CD4-positive, alpha-beta memory T cell (primary cell): ENCODE measurements at regions of chr7 and their contacts with region 1.

Region 1: DNA sequence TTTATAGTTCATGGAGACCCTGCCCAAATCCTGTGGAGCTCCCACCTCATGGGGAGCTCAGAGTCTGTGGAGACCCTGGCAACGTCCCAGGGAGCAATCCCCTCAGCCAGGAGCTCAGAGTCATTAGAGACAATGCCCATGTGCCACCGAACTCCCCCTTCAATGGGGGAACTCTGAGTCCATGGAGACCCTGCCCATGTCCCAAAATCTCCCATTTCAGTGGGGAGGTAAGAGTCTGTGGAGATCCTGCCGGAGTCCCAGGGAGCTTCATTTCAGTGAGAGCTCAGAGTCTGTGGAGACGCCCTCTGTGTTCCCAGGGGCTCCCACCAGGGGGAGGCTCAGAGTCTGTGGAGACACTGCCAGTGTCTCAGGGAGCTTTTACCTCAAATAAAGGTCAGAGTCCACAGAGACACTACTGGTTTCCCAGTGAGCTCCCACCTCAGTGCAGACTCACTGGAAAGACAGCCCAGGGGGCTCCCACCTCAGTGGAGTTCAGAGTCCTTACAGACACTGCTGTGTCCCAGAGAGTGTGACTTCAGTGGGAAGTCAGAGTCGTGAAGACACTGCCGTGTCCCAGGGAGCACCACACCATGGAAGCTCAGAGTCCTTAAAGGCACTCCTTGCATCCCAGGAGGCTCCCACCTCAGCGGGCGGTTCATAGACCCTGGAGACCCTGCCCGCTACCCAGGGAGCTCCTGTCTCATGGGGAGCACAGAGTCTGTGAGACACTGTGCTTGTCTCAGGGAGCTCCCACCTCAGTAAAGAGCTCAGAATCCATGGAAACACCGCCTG is 5.0 kb downstream of the MYO1G start:
- DNase-seq: peak; percentile 44 to 72 (median 61)
- H3K4me3 ChIP-seq: no peak overlapping the region
- H3K4me3 Mint-ChIP-seq: peak overlapping the region in 1 of 8 donors; percentile 46
- H3K27ac ChIP-seq: peak overlapping the region; percentile 85
- H3K27ac Mint-ChIP-seq: peak overlapping the region in 6 of 7 donors; percentile 43 to 84 (median 51)
- H3K4me1 ChIP-seq: peaks cover 50% of the 10 kb centered on the region
- H3K4me1 Mint-ChIP-seq: peaks cover 12 to 62% (median 37%) of the 10 kb centered on the region in 4 donors
- H3K27me3 ChIP-seq: no peaks in the 10 kb centered on the region
- H3K27me3 Mint-ChIP-seq: no peaks in the 10 kb centered on the region

Region 2: DNA sequence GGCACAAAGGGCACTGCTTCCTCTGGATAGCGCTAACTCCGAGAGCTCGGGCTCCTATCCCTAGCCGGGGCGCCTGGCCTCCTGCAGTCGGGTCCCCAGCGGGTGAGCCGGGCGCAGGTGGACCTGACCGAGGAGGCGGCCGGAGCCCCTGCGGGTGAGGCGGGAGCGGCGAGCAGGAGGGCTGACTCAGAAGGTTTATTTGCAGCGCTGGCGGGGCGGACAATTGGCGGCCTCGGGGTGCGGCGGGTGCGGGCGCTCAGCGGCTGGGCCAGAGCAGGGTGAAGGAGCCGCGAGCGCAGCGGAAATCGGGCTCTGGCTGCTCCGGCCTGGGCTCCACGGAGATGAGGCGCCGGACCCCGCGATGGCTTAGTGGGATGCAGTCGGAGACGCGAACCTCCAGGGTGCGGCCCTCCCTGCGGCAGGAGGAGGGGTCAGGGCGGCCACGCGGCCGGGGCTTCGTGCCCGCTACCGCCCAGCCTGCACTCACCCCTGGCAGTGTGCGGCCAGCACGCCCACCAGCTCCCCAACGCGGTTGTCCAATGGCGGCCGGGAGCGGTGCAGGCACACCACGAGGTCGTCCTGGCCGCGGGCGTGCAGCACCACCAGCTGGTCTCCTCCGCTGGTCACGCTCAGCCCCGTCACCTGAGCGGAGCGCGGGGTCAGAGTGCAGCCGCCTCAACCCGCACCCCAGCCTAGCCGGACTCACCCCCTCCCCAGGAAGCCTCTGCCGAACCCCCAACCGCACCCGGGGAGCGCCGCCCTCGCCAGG is 11.1 kb before region 1 on chr7:
- CTCF ChIA-PET with region 1: interaction called, 19 read pairs
- POLR2A ChIA-PET with region 1: interaction called, 23 read pairs
- intact Hi-C with region 1: no loop called
- DNase-seq: no peak
- H3K4me3 ChIP-seq: no peak overlapping the region
- H3K4me3 Mint-ChIP-seq: no peak overlapping the region
- H3K27ac ChIP-seq: peak overlapping the region; percentile 26
- H3K27ac Mint-ChIP-seq: peak overlapping the region in 1 of 7 donors; percentile 79
- H3K4me1 ChIP-seq: peaks cover 19% of the 10 kb centered on the region
- H3K4me1 Mint-ChIP-seq: peaks cover 13 to 21% (median 18%) of the 10 kb centered on the region in 4 donors
- H3K27me3 ChIP-seq: no peaks in the 10 kb centered on the region
- H3K27me3 Mint-ChIP-seq: no peaks in the 10 kb centered on the region

Region 3: GRCh38 chr7:45013465-45013967 is 39.7 kb after region 1 on chr7:
- CTCF ChIA-PET with region 1: interaction called, 28 read pairs
- POLR2A ChIA-PET with region 1: interaction called, 8 read pairs
- intact Hi-C with region 1: no loop called
- DNase-seq: peak in 4 of 5 donors; percentile 55 to 71 (median 62)
- H3K4me3 ChIP-seq: no peak overlapping the region
- H3K4me3 Mint-ChIP-seq: peak overlapping the region in 3 of 8 donors; percentile 16 to 50 (median 41)
- H3K27ac ChIP-seq: no peak overlapping the region
- H3K27ac Mint-ChIP-seq: peak overlapping the region; percentile 41 to 92 (median 81)
- H3K4me1 ChIP-seq: peaks cover 23% of the 10 kb centered on the region
- H3K4me1 Mint-ChIP-seq: peaks cover 27 to 59% (median 39%) of the 10 kb centered on the region in 4 donors
- H3K27me3 ChIP-seq: no peaks in the 10 kb centered on the region
- H3K27me3 Mint-ChIP-seq: no peaks in the 10 kb centered on the region

Region 4: DNA sequence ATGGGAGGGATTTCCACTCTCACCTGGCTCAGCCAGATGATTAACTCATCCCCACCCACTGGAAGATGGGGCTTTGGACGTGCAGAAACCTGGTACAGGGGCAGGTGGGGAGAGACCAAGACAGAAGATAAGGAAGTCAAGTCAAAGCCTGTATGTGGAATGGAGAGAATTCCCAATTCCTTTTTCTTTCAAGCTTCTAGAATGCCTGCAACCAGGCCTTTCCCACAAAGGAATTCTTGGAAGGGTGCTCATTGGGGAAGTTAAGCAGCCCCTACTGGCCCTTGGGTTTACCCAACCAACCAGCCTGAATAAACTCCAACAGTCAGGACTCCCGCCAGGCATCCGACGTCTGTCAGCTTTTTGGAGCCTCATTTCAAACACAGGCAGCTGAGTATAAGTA is 65.3 kb after region 1 on chr7:
- CTCF ChIA-PET with region 1: interaction called, 88 read pairs
- POLR2A ChIA-PET with region 1: interaction called, 551 read pairs
- intact Hi-C with region 1: no loop called
- DNase-seq: no peak
- H3K4me3 ChIP-seq: no peak overlapping the region
- H3K4me3 Mint-ChIP-seq: no peak overlapping the region
- H3K27ac ChIP-seq: no peak overlapping the region
- H3K27ac Mint-ChIP-seq: peak overlapping the region in 6 of 7 donors; percentile 42 to 86 (median 72)
- H3K4me1 ChIP-seq: peaks cover 43% of the 10 kb centered on the region
- H3K4me1 Mint-ChIP-seq: peaks cover 38 to 81% (median 50%) of the 10 kb centered on the region in 4 donors
- H3K27me3 ChIP-seq: no peaks in the 10 kb centered on the region
- H3K27me3 Mint-ChIP-seq: no peaks in the 10 kb centered on the region

Region 5: DNA sequence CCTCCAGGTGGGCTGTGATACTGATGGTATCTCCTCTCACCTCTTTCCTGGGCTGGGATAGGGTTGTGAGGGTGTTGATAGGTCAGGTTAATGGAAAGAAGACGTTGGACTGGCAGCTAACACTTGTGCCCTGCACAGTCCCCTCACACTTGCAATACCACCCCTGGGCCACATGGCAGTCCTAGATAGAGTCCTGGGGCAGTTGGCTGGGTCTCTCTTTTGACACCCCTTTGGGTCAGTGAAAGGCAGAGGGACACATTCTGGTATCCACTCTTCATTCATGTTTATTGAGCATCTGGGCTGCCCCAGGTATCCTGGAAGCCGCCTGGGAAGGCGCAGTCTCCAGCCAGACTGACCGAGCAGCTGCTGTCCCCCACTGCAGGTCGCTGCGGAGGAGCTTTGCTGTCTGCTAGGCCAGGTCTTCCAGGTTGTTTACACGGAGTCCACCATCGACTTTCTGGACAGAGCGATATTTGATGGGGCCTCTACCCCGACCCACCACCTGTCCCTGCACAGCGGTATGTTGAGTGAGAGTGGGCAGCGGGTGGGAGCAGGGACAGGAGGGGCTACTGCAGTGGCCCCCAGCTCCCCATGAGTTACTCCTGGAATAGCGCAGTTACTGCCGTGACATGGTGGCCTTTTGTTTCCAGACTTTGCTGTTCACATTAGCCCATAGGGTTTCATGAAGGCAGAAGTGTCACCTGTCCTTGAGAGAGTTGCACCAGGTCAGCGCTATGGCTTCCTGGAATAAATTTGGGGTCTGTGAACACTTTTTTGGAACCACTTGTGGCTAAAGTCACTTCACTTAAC is 95.8 kb after region 1 on chr7:
- CTCF ChIA-PET with region 1: interaction called, 25 read pairs
- POLR2A ChIA-PET with region 1: interaction called, 4 read pairs
- intact Hi-C with region 1: no loop called
- DNase-seq: no peak
- H3K4me3 ChIP-seq: no peak overlapping the region
- H3K4me3 Mint-ChIP-seq: no peak overlapping the region
- H3K27ac ChIP-seq: no peak overlapping the region
- H3K27ac Mint-ChIP-seq: peak overlapping the region in 1 of 7 donors; percentile 25
- H3K4me1 ChIP-seq: peaks cover 12% of the 10 kb centered on the region
- H3K4me1 Mint-ChIP-seq: peaks cover 6 to 25% (median 14%) of the 10 kb centered on the region in 4 donors
- H3K27me3 ChIP-seq: no peaks in the 10 kb centered on the region
- H3K27me3 Mint-ChIP-seq: no peaks in the 10 kb centered on the region

Region 6: GRCh38 chr7:45136106-45137060 is 162.6 kb after region 1 on chr7:
- CTCF ChIA-PET with region 1: interaction called, 239 read pairs
- POLR2A ChIA-PET with region 1: interaction called, 31 read pairs
- intact Hi-C with region 1: loop called (anchors 1 kb)
- DNase-seq: peak; percentile 65 to 77 (median 74)
- H3K4me3 ChIP-seq: no peak overlapping the region
- H3K4me3 Mint-ChIP-seq: peak overlapping the region in 1 of 8 donors; percentile 55
- H3K27ac ChIP-seq: no peak overlapping the region
- H3K27ac Mint-ChIP-seq: peak overlapping the region in 5 of 7 donors; percentile 1 to 86 (median 73)
- H3K4me1 ChIP-seq: peaks cover 4% of the 10 kb centered on the region
- H3K4me1 Mint-ChIP-seq: peaks cover 6 to 11% (median 9%) of the 10 kb centered on the region in 4 donors
- H3K27me3 ChIP-seq: no peaks in the 10 kb centered on the region
- H3K27me3 Mint-ChIP-seq: no peaks in the 10 kb centered on the region